Mammary epithelial cell (primary cell): ENCODE measurements at regions of chr12 and their contacts with region 1.

Region 1: DNA sequence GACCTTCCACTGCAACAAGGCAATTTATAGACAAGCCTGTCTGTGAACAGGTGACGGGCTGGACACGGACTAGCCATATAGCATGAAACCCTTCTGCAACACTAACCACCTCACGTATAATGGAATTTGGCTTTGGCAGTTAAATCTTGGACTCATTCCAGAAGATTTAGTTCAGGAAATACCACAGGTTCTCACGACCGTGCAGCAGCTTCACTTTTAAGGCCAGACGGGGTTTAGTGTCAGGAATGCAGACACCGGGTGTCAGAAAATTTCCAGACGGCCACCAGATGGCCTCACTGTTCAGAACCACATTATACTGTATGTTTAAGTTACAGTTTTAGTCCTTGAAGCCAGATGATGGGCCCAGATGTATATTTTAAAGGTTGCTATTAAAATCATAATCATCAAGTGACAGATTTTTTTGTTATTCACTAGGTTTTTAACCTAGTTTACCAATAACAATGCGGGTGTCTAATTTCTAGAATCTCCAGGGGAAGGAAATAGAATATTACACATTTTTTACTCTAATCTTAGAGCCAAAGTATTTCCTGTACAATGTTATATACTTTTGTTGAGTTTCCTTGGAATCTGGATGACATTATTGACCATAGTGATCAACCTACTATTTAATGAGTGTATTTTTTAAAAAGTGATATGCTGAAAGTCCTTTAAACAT is 90.5 kb upstream of the TMPO start:
- DNase-seq: peak; percentile 69
- H3K4me3 ChIP-seq: no peak overlapping the region
- H3K27ac ChIP-seq: no peak overlapping the region
- H3K4me1 ChIP-seq: no peaks in the 10 kb centered on the region
- H3K27me3 ChIP-seq: no peaks in the 10 kb centered on the region
- CTCF ChIP-seq: peak; percentile 68 to 75

Region 2: DNA sequence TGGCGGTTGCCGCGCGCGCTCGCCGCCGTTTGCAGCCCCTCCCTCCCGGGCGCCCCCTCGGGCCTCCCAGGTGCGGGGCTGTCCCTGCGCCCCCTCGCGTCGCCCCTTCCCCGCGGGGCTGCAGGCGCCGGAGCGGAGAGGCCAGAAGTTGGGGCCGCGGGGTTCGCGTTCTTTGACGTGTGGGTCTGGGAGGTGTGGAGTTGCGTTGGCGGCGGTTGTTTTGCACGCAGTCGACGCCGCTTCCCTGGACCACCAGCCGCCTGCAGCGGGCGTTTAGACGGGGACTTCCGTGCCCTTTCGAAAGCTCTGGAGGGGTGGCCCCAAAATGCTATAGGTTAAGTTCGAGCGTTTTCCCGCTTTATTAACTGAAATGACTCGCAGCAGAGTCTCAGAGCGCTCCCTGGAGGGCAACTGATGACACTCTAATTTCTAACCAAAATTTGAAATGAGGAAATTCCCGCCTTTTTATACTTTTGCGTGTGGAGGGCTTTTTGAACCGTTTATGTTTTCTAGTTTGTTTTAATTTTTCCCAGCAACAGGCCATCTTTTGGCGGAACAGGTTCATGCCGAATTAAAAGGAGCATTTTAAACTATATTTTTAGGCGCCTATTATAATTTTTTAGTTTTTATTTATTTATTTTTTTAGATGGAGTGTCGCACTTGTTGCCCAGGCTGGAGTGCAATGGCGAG is 91.5 kb after region 1 on chr12:
- CTCF ChIA-PET with region 1: interaction called, 7 read pairs
- dilution Hi-C with region 1: no loop called
- in situ Hi-C with region 1: loop called in 1 of 2 experiments (anchors 10 kb)
- intact Hi-C with region 1: loop called (anchors 1 kb)
- DNase-seq: peak; percentile 78
- H3K4me3 ChIP-seq: peak overlapping the region; percentile 86 to 90 (median 87)
- H3K27ac ChIP-seq: peak overlapping the region; percentile 69
- H3K4me1 ChIP-seq: no peaks in the 10 kb centered on the region
- H3K27me3 ChIP-seq: no peaks in the 10 kb centered on the region
- CTCF ChIP-seq: peak; percentile 51 to 78